IMR-90 (cell line): ENCODE measurements at regions of chr18 and their contacts with region 1.

Region 1: GRCh38 chr18:30613467-30613801 is 429.1 kb downstream of the DSC3 start:
- DNase-seq: no peak
- ATAC-seq: no peak
- H3K4me3 ChIP-seq: no peak overlapping the region
- H3K27ac ChIP-seq: no peak overlapping the region
- H3K4me1 ChIP-seq: no peaks in the 10 kb centered on the region
- H3K27me3 ChIP-seq: no peaks in the 10 kb centered on the region
- CTCF ChIP-seq: no peak
- POLR2A ChIP-seq: no peak
- RAD21 ChIP-seq: no peak

Region 2: DNA sequence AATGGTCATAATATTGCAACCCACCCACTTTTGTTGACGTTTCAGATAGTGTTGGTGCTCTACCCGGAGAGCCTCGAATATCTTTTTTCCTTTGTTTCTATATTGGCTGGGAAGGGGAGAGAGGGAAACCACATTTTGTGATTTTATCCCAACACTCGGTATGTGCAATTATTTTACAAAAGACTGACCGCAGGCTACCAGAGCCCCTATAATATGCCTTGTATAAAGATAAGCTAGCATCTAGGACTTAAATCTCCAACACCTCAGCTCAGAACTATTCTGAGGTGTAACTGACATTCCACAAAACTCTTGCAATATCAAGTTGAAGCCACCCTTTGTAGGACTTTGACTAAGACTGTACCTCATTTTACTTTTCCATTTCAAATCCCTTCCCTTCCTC is 81.1 kb before region 1 on chr18:
- CTCF ChIA-PET with region 1: no interaction called
- POLR2A ChIA-PET with region 1: no interaction called
- dilution Hi-C with region 1: no loop called
- in situ Hi-C with region 1: no loop called
- intact Hi-C with region 1: loop called (anchors 5 kb)
- DNase-seq: no peak
- ATAC-seq: no peak
- H3K4me3 ChIP-seq: no peak overlapping the region
- H3K27ac ChIP-seq: no peak overlapping the region
- H3K4me1 ChIP-seq: no peaks in the 10 kb centered on the region
- H3K27me3 ChIP-seq: no peaks in the 10 kb centered on the region
- CTCF ChIP-seq: no peak
- POLR2A ChIP-seq: no peak
- RAD21 ChIP-seq: no peak